Sigmoid colon (tissue), 7 donors: ENCODE measurements at regions of chr17 and their contacts with region 1.

Region 1: DNA sequence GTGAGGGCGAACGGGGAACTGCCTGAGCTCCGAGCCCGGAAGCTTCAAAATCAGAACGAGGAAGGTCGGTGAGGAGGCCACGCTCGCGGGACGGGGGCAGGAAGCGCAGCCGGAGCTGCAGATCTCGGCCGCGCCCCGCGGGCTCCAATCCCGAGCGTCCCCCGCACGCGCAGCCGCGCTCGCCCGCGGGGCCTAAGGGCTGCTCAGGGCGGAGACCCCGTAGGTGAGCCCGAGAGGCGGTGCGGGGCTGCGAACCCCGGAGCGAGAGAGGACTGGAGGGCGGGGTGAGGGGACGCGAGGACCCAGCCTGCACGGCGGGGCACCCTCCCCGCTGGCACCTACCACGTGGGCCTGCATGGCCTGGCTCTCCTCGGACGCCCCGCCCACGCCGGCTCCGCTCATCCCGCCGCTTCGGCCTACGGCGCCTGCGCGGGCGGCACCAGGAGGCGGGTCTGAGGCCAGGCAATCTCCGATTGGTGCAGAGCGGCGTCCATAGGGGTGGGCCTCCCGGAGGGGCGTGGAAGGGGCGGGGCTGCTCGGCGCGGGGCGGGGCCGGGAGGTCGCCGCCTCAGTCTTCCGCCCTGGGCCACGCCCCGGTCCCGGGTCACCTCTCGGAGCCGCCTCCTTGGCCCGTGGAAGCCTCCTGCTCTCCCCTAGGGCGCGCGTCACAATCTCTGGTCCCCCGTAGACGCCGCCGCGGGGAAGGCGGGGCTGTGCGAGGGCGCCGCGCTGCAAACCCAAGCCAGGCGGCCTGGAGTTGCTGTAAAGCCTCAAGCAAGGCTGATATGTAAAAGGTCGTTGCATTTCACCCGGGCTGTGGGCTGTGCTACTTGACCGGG is 27.8 kb upstream of the METRNL start:
- DNase-seq: peak; percentile 99
- H3K4me3 ChIP-seq: peak overlapping the region; percentile 54 to 93 (median 78)
- H3K27ac ChIP-seq: peak overlapping the region; percentile 79 to 85 (median 83)
- H3K4me1 ChIP-seq: peaks cover 0 to 23% (median 15%) of the 10 kb centered on the region in 4 donors
- H3K27me3 ChIP-seq: no peaks in the 10 kb centered on the region
- CTCF ChIP-seq: no peak
- EP300 ChIP-seq: peak in 1 of 4 donors; percentile 11
- POLR2A ChIP-seq: peak; percentile 31 to 44

Region 2: GRCh38 chr17:82876602-82877379 is 174.8 kb before region 1 on chr17:
- intact Hi-C with region 1: loop called (anchors 10 kb)
- DNase-seq: peak; percentile 96
- H3K4me3 ChIP-seq: no peak overlapping the region
- H3K27ac ChIP-seq: peak overlapping the region; percentile 75 to 82 (median 78)
- H3K4me1 ChIP-seq: peaks cover 0 to 43% (median 35%) of the 10 kb centered on the region in 4 donors
- H3K27me3 ChIP-seq: no peaks in the 10 kb centered on the region
- CTCF ChIP-seq: peak; percentile 36 to 49 (median 38)
- EP300 ChIP-seq: no peak
- POLR2A ChIP-seq: no peak

Region 3: DNA sequence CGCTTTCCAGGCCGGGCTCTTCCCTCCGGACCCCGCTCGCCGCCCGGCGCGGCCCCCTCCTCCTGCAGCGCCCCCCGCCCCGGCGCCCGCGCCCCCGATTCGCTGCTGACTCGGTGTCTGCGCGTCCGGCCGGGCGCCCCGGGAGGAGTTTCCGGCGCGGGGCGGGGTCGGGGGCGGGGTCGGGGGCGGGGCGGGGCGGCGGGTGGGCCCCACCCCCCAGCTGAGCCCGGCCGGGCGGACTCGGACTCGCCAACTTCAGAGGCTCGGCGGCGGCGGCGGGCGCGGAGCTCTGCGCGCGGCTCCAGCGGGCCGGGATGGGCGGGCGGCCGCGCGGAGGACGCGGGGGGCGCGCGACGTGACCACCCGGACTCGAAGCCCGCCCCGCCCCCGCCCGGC is 27.7 kb after region 1 on chr17 and contains the start of gene METRNL:
- intact Hi-C with region 1: loop called (anchors 1 kb)
- DNase-seq: peak; percentile 92
- H3K4me3 ChIP-seq: peak within 1 kb of the TSS; percentile 73 to 97 (median 90)
- H3K27ac ChIP-seq: peak within 1 kb of the TSS; percentile 86 to 96 (median 87)
- H3K4me1 ChIP-seq: peaks cover 0 to 46% (median 39%) of the 10 kb centered on the region in 4 donors
- H3K27me3 ChIP-seq: no peaks in the 10 kb centered on the region
- CTCF ChIP-seq: no peak
- EP300 ChIP-seq: no peak
- POLR2A ChIP-seq: no peak
- total RNA-seq, gene METRNL: 26.8 to 53.6 (median 29.8) TPM